ENCODE measurements at regions of chr1 and their contacts with region 1.

Region 1: DNA sequence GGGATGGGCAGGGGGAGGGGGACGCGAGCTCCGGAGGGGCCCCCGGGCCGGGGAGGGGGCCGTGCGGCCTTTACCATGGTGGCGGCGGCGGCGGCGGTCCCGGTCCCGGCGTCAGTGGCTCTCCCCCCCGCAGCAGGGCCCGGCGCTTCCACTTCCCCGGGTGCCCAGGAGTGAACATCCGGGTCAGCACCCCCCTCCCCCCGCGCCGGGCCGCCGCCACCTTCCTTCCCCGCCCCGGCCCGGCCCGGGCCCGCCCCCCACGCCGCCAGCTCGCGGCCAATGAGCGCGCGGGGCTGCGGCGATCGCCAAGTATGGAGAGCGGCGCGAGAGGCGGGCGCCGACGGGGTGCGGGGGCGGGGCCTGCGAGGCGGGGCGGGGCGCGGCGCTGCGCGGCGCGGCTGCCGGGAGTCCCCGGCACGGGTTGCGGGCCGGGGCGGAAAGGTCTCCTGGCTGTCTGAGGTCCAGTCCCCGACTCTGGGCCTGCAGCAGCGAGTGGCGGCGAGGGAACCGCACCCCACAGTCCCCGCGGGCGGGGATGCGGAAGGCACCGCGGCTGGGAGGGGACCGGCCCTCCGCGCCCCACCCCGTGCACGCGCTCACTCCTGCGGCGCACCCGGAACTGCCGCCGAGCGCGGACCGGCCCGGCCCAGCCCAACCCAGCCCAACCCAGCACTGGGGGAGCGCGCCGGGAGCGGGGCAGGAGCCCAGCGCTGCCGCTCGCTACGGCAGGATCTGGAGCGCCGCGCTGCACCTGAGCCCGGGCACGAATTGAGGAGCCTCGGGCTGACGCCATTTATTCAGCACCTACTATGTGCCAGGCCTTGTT is at the start of gene CAPZB:
- DNase-seq: peak; percentile 90 to 92 (median 92)
- H3K4me3 ChIP-seq: peak within 1 kb of the TSS; percentile 87 to 88
- H3K4me3 Mint-ChIP-seq: peak within 1 kb of the TSS; percentile 91 to 98 (median 94)
- H3K27ac ChIP-seq: peak within 1 kb of the TSS; percentile 89
- H3K27ac Mint-ChIP-seq: peak within 1 kb of the TSS; percentile 94 to 99 (median 97)
- H3K4me1 ChIP-seq: peaks cover 63% of the 10 kb centered on the region
- H3K4me1 Mint-ChIP-seq: peaks cover 46 to 69% (median 55%) of the 10 kb centered on the region in 4 donors
- H3K27me3 ChIP-seq: no peaks in the 10 kb centered on the region
- H3K27me3 Mint-ChIP-seq: no peaks in the 10 kb centered on the region
- total RNA-seq, gene CAPZB: 244 to 255 TPM

Region 2: DNA sequence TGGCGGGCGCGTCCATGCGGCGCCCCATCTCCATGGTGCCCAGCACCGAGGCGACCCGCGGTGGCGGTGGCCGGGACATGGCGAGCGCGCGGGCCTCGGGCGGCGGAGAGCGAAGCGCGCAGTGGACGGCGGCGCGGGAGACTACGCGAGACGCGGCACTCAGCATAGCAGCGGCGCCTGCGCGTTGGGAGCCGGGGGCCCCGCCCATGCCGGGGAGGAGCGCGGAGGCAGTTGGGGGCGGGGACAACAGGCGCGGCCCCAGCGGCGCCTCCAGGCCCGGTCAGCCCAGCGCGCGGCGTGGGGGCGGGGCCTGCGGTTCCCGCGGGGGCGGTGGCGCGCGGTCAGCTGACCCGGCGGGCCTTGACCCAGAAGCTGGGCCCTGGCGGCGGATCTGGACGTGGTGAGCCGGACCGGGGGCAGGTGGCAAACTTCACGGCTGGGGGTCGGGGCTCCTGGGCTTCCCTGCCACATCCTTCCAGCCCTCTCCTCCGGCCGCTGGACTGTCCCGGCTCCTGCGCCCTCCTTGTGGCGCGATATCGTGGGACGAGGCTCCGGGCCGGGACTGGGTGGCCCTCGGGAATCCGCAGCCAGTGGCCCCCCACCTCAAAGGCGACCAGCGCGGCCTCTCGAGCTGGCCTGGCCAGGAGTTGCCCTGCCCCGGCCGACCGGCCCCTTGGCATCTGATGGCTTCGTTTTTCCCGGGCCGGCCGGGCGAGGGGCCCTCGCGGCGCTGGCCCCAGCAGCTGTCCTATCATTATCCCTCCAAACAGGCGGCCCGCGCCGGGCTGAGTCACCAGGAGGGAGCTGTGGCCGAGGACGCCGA is 173.4 kb before region 1 on chr1 and contains the starts of genes AKR7A2 and SLC66A1:
- CTCF ChIA-PET with region 1: interaction called, 3 read pairs
- POLR2A ChIA-PET with region 1: no interaction called
- intact Hi-C with region 1: loop called (anchors 5 kb)
- DNase-seq: peak; percentile 80 to 94 (median 89)
- H3K4me3 ChIP-seq: peak within 1 kb of the TSS; percentile 49 to 91
- H3K4me3 Mint-ChIP-seq: peak within 1 kb of the TSS; percentile 81 to 95 (median 90)
- H3K27ac ChIP-seq: peak within 1 kb of the TSS; percentile 70
- H3K27ac Mint-ChIP-seq: peak within 1 kb of the TSS; percentile 77 to 91 (median 87)
- H3K4me1 ChIP-seq: peaks cover 34% of the 10 kb centered on the region
- H3K4me1 Mint-ChIP-seq: peaks cover 28 to 55% (median 35%) of the 10 kb centered on the region in 4 donors
- H3K27me3 ChIP-seq: no peaks in the 10 kb centered on the region
- H3K27me3 Mint-ChIP-seq: no peaks in the 10 kb centered on the region
- total RNA-seq, gene AKR7A2: 25.1 to 26.3 TPM
- total RNA-seq, gene SLC66A1: 7.4 to 10.2 TPM

Region 3: DNA sequence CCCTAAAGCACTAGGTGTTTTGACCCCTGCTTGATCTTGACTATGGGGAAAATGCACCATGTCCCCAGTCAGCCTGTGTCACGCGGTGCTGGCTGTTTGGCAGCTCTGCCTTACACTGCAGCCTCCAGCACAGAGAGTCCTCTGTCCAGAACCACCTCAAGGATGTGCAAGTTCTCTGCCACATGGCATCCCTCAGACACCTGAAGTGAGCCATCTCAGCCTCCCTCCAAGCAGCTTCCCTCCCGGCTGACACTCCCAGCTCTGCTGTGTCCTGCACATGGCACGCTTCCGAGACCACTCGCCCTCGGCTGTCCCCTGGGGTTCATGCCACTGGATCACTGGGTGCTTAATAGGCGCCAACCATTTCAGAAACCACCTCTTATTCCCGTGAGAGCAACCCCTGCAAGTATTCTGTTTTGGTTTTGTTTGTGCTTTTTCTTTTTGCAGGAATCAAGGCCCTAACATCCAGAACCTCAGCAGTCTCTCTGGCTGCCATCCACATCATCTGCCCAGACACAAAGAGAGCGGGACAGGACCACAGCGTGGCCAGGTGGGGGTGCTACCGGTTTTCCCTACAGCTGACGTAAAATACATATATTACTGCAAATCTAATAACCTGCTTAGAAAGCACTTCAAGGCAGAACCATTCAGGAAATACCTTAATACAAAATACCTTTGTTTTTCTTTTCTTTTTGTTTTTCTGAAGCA is 46.0 kb before region 1 on chr1:
- CTCF ChIA-PET with region 1: interaction called, 10 read pairs
- POLR2A ChIA-PET with region 1: interaction called, 8 read pairs
- intact Hi-C with region 1: loop called (anchors 5 kb)
- DNase-seq: peak; percentile 38 to 50 (median 42)
- H3K4me3 ChIP-seq: no peak overlapping the region
- H3K4me3 Mint-ChIP-seq: peak overlapping the region in 6 of 8 donors; percentile 22 to 67 (median 36)
- H3K27ac ChIP-seq: peak overlapping the region; percentile 22
- H3K27ac Mint-ChIP-seq: peak overlapping the region; percentile 45 to 88 (median 81)
- H3K4me1 ChIP-seq: peaks cover 91% of the 10 kb centered on the region
- H3K4me1 Mint-ChIP-seq: peaks cover 71 to 98% (median 83%) of the 10 kb centered on the region in 4 donors
- H3K27me3 ChIP-seq: no peaks in the 10 kb centered on the region
- H3K27me3 Mint-ChIP-seq: no peaks in the 10 kb centered on the region

Region 4: DNA sequence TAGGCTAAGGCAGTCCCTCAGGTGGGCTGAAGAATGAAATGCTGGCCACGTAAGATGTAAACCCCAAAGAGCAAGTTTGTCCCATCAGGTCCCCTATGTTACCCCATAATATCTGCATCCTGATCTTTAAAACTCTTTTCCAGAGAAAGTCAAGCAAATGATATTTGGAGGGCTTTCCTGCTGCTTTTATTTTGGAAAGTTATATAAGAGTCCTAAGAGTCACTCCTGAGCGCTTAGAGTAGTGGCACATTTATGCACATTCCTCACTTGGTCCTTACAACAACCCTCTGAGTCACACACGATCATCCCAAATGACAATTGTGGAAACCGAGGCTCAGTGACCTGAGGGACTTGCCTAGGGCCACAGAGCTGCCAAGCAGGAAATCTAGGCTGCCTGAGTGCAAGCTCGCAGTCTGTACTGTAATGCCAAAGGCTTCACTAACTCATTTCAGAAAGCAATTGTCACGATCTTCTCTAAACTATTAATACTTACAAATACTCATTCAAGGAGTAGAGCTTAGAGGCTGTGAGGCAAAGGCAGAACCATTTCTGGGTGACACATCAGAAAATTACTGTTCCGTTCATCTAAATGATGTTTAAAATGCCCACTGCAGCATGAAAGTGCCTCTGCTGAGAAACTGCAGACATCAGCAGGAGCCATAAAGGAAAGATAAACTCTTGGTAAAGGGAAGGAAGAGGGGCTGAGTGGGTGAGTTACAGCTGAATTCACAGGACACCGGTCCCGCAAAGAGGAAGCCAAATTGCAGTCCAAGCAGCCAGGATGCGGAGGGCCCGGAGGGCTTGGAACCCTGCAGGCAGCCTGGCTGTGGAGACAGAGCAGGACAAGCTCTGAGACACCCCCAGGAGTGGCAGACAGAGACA is 31.1 kb before region 1 on chr1:
- CTCF ChIA-PET with region 1: interaction called, 14 read pairs
- POLR2A ChIA-PET with region 1: interaction called, 734 read pairs
- intact Hi-C with region 1: no loop called
- DNase-seq: no peak
- H3K4me3 ChIP-seq: no peak overlapping the region
- H3K4me3 Mint-ChIP-seq: peak overlapping the region; percentile 39 to 79 (median 70)
- H3K27ac ChIP-seq: peak overlapping the region; percentile 36
- H3K27ac Mint-ChIP-seq: peak overlapping the region; percentile 87 to 93 (median 90)
- H3K4me1 ChIP-seq: peaks cover 95% of the 10 kb centered on the region
- H3K4me1 Mint-ChIP-seq: peaks cover 69 to 96% (median 80%) of the 10 kb centered on the region in 4 donors
- H3K27me3 ChIP-seq: no peaks in the 10 kb centered on the region
- H3K27me3 Mint-ChIP-seq: no peaks in the 10 kb centered on the region

Region 5: GRCh38 chr1:19468397-19468956 is 17.1 kb before region 1 on chr1:
- CTCF ChIA-PET with region 1: interaction called, 26 read pairs
- POLR2A ChIA-PET with region 1: interaction called, 734 read pairs
- intact Hi-C with region 1: loop called (anchors 1 kb)
- DNase-seq: peak; percentile 65 to 86 (median 72)
- H3K4me3 ChIP-seq: peak overlapping the region; percentile 23 to 28
- H3K4me3 Mint-ChIP-seq: peak overlapping the region; percentile 71 to 87 (median 80)
- H3K27ac ChIP-seq: peak overlapping the region; percentile 59
- H3K27ac Mint-ChIP-seq: peak overlapping the region; percentile 86 to 97 (median 95)
- H3K4me1 ChIP-seq: peaks cover 97% of the 10 kb centered on the region
- H3K4me1 Mint-ChIP-seq: peaks cover 72 to 98% (median 86%) of the 10 kb centered on the region in 4 donors
- H3K27me3 ChIP-seq: no peaks in the 10 kb centered on the region
- H3K27me3 Mint-ChIP-seq: no peaks in the 10 kb centered on the region

Region 6: DNA sequence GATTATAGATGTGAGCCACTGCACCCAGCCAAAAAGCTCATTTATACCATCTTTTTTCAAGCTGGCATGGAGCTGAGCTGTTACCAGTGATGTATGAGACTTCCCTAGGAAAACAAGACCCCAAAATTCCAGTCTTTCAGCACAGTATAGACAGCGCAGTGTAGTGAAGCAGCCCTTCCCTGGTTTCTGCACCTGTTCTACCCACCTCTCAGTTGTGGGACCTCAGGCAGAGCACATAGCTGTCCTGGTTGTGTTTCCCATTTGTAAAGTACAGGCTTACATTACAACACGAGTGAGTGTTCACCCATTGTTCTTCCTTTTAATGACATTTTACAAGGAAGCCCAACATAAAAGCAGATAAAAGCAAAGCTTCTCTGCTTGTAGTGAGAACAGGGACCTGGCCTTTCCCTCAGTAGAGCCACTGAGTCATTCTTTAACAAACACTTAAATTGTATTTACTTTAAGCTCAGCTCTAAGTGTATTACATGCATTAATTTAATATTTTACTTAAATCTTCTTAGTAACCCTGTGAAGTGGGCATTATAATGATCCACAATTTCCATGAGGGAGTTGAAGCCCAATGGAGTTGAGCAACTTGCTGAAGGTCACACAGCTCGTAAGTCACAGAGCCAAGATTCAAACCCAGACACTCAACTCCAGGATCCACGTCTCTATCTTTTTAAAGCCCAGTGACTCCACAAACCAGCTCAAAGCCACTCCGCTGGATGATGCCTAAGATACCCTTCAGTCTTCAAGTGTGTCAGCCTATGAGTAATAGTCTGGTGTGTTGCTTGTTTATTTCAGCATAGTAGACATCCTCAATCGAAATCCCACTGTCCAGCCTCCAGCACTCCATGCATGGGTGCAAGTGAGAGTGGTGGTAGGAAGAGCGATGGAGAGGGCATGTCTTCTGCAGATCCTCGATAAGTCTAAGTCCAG is 40.3 kb after region 1 on chr1:
- CTCF ChIA-PET with region 1: no interaction called
- POLR2A ChIA-PET with region 1: no interaction called
- intact Hi-C with region 1: no loop called
- DNase-seq: no peak
- H3K4me3 ChIP-seq: no peak overlapping the region
- H3K4me3 Mint-ChIP-seq: no peak overlapping the region
- H3K27ac ChIP-seq: no peak overlapping the region
- H3K27ac Mint-ChIP-seq: no peak overlapping the region
- H3K4me1 ChIP-seq: no peaks in the 10 kb centered on the region
- H3K4me1 Mint-ChIP-seq: no peaks in the 10 kb centered on the region
- H3K27me3 ChIP-seq: no peaks in the 10 kb centered on the region
- H3K27me3 Mint-ChIP-seq: peaks cover 0 to 2% of the 10 kb centered on the region in 2 donors

Region 7: GRCh38 chr1:19563324-19564097 is 77.9 kb after region 1 on chr1:
- CTCF ChIA-PET with region 1: no interaction called
- POLR2A ChIA-PET with region 1: no interaction called
- intact Hi-C with region 1: no loop called
- DNase-seq: no peak
- H3K4me3 ChIP-seq: no peak overlapping the region
- H3K4me3 Mint-ChIP-seq: no peak overlapping the region
- H3K27ac ChIP-seq: no peak overlapping the region
- H3K27ac Mint-ChIP-seq: no peak overlapping the region
- H3K4me1 ChIP-seq: peaks cover 9% of the 10 kb centered on the region
- H3K4me1 Mint-ChIP-seq: peaks cover 3 to 10% (median 5%) of the 10 kb centered on the region in 4 donors
- H3K27me3 ChIP-seq: no peaks in the 10 kb centered on the region
- H3K27me3 Mint-ChIP-seq: no peaks in the 10 kb centered on the region

Region 8: GRCh38 chr1:19651141-19651737 is 165.7 kb after region 1 on chr1:
- CTCF ChIA-PET with region 1: interaction called, 8 read pairs
- POLR2A ChIA-PET with region 1: interaction called, 9 read pairs
- intact Hi-C with region 1: loop called (anchors 1 kb)
- DNase-seq: peak; percentile 35 to 48 (median 47)
- H3K4me3 ChIP-seq: no peak overlapping the region
- H3K4me3 Mint-ChIP-seq: no peak overlapping the region
- H3K27ac ChIP-seq: no peak overlapping the region
- H3K27ac Mint-ChIP-seq: peak overlapping the region in 3 of 7 donors; percentile 23 to 78 (median 57)
- H3K4me1 ChIP-seq: peaks cover 18% of the 10 kb centered on the region
- H3K4me1 Mint-ChIP-seq: peaks cover 15 to 45% (median 24%) of the 10 kb centered on the region in 4 donors
- H3K27me3 ChIP-seq: no peaks in the 10 kb centered on the region
- H3K27me3 Mint-ChIP-seq: no peaks in the 10 kb centered on the region